ENCODE measurements at regions of chr4 and their contacts with region 1.

Region 1: DNA sequence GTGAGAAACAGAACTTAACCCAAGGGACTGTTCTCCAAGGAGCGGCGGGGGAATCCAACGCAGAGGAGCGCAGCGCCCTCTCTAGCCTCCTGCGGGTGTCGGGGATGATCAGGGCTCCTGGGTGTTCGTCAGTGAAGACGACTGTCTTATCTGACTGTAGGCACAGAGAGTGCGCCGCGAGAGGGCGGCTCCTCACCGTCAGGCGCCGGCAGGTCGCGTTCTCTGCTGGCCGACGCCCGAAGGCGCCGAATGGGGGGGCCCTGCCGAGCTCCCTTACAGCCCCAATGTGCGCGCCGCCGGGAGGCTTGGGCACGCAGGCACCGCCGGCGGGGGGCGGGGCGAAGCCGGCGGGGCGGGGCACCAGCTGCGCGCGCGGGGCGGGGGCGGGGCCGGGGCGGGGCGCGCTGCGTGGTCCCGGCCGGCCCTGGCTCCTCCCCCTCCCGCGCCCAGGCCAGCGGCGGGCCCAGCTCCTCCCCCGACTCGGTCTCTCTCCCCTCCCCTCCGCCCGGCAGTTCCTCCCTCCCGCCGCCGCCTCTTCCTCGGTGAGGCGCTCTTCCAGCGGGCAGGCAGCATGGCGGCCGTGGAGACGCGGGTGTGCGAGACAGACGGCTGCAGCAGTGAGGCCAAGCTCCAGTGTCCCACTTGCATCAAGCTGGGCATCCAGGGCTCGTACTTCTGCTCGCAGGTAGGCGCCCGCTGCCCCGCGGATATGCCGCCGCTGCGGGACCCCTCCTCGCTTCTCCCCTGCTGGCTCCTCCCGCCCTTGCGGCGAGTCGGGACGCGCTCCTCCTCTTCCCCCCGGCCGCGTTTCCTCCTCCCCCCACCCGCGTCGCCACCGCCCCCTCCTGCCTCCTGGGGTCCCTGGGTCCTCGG is at the start of gene METAP1:
- DNase-seq: peak; percentile 98
- H3K4me3 ChIP-seq: peak within 1 kb of the TSS; percentile 95 to 100 (median 98)
- H3K27ac ChIP-seq: peak within 1 kb of the TSS; percentile 84 to 94 (median 91)
- H3K4me1 ChIP-seq: peaks cover 7 to 30% (median 28%) of the 10 kb centered on the region in 4 donors
- H3K27me3 ChIP-seq: no peaks in the 10 kb centered on the region
- CTCF ChIP-seq: peak; percentile 55 to 76 (median 65)
- EP300 ChIP-seq: no peak
- POLR2A ChIP-seq: no peak
- total RNA-seq, gene METAP1: 38.4 to 58.1 (median 50.7) TPM

Region 2: DNA sequence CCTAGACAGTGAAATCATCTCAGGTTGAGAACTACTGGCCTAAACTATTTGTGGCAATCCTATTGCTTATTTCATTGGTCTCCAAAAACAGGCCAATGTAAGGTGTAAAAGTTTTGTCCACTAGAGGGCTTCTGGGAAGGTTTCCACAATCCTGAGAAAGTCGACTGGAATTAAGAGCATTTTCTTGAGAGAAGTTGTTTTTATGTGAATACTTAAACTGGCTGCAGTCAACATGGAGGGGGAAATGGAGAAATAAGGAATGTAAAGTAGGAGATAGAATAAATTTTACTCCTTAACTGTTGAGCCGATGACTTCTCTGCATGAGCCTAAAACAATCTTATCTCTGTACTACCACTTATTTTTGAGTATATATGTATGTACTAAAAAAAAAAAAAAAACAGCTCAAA is 55.5 kb before region 1 on chr4:
- intact Hi-C with region 1: loop called (anchors 5 kb)
- DNase-seq: peak; percentile 66
- H3K4me3 ChIP-seq: no peak overlapping the region
- H3K27ac ChIP-seq: no peak overlapping the region
- H3K4me1 ChIP-seq: peaks cover 0 to 5% (median 0%) of the 10 kb centered on the region in 4 donors
- H3K27me3 ChIP-seq: no peaks in the 10 kb centered on the region
- CTCF ChIP-seq: peak; percentile 59 to 76 (median 60)
- EP300 ChIP-seq: no peak
- POLR2A ChIP-seq: no peak